AG04449 (cell line): ENCODE measurements at regions of chr16 and their contacts with region 1.

Region 1: GRCh38 chr16:67561824-67562525 is 351 bp upstream of the CTCF start:
- DNase-seq: no peak
- H3K4me3 ChIP-seq: peak overlapping the region; percentile 83
- CTCF ChIP-seq: no peak

Region 2: GRCh38 chr16:67546761-67547422 is 15.1 kb before region 1 on chr16:
- CTCF ChIA-PET with region 1: interaction called, 185 read pairs
- POLR2A ChIA-PET with region 1: interaction called, 3 read pairs
- DNase-seq: no peak
- H3K4me3 ChIP-seq: no peak overlapping the region
- CTCF ChIP-seq: peak; percentile 93

Region 3: DNA sequence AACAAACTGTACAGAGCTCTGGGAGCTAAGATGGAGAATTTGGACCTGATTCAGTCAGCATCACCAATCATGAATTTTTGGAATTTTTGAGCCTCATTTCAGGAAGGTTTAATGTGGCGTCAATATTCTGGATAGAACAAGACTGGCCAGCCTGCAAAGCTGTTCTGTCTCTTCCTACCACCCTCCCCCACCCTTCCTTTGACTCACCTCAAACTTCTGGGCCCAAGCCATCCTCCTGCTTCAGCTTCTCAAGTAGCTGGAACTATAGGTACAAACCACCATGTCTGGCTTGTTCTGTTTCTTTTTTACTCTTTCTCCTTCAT is 33.0 kb after region 1 on chr16:
- CTCF ChIA-PET with region 1: interaction called, 13 read pairs
- POLR2A ChIA-PET with region 1: no interaction called
- DNase-seq: no peak
- H3K4me3 ChIP-seq: no peak overlapping the region
- CTCF ChIP-seq: no peak

Region 4: GRCh38 chr16:67660564-67661028 is 98.6 kb after region 1 on chr16 and contains the start of gene PARD6A:
- CTCF ChIA-PET with region 1: interaction called, 101 read pairs
- POLR2A ChIA-PET with region 1: interaction called, 4 read pairs
- DNase-seq: peak; percentile 53
- H3K4me3 ChIP-seq: peak within 1 kb of the TSS; percentile 94
- CTCF ChIP-seq: no peak

Region 5: DNA sequence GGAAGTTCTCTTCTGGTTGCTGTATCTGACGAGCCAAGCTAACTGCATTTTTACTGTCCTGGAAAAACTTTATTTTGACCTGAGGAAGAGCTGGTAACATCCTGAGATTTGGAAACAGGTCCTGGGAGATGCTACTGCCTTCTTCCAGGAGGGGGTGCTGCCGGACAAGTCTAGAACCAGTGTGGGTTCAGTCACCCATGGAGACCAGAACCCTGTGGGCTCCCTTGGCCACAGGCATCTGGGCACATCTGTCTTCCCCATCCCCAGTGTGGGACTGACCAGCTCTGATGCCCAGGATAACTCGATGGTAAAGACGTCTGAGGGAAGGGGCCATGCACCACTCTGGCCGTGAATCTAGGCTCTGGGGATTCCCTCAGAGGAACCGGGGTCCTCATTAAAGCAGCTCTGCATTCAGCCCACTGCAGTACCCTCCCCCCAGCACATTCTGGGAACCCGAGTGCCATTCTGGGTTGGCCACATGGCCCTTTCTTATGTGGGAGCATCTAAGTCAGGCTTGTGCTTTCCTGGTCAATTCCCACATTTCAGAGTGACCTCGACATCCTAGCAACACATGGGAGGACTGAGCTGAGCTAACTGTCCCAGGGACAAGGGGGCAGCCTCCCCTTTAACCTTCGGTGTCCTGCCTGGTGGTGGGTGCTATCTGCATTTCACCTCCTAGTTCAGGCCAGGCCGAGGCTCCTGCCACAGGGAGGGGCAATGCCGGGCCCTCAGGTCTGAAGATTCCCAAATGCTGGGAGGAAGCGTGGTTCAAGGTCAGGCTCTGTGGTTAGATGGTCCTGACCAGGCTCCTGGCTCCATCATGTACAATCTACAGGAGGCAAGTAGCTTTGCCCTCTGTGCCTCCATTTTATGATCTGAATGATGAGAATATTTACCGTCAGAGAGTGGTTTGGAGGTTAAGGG is 111.0 kb after region 1 on chr16:
- CTCF ChIA-PET with region 1: interaction called, 101 read pairs
- POLR2A ChIA-PET with region 1: interaction called, 14 read pairs
- DNase-seq: peak; percentile 14
- H3K4me3 ChIP-seq: no peak overlapping the region
- CTCF ChIP-seq: peak; percentile 72